ENCODE measurements at regions of chr21 and their contacts with region 1.

Region 1: DNA sequence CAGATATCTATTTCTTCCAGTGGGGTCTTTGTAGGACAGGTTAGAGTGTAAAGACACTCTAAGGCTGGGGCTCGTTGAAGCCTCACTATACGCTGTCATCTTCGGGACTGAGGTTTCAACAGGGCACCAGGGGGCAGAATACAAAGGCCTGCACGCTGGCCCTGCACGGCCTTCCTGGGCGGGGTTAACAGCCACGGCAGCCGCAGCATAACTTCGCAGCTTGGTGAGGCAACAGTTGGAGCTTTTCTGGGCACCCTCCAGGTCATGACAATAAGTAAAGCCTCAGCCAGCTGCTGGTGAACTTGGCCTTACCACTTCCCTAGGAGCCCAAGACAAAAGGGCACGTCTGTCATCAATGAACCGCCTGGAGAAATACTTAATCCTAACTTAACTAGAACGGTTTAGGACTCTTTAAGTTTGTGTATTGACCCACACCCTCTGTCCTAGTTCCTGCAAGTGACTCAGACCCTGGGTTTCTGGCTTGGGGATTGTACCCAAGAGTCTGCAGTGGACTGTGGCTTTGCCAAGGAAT is 2.3 kb upstream of the RUNX1 start:
- DNase-seq: peak; percentile 54
- ATAC-seq: peak; percentile 45
- H3K4me3 Mint-ChIP-seq: peak overlapping the region; percentile 68
- H3K27ac Mint-ChIP-seq: peak overlapping the region; percentile 97
- H3K4me1 Mint-ChIP-seq: peaks cover 60% of the 10 kb centered on the region
- H3K27me3 Mint-ChIP-seq: no peaks in the 10 kb centered on the region
- CTCF ChIP-seq: no peak

Region 2: DNA sequence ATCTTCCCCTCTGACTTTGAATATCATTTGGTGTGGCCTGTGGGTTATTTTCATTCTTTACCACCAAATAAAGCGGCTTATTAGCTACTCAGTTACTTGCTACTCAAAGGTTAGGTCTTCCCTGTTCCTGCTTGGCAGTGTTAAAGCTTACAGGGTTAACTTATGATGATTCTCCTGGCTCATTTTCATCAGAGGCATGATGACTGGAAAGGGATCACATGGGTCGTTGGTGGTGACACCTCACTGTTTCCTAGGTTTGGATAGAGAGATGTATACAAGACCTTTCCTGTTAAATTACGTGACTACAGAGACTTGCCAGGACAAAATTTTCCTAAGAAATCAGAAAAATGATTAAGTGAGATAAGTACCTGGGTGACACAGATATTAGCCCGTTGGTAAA is 950.6 kb before region 1 on chr21:
- CTCF ChIA-PET with region 1: no interaction called
- POLR2A ChIA-PET with region 1: no interaction called
- intact Hi-C with region 1: no loop called
- DNase-seq: no peak
- ATAC-seq: no peak
- H3K4me3 Mint-ChIP-seq: no peak overlapping the region
- H3K27ac Mint-ChIP-seq: no peak overlapping the region
- H3K4me1 Mint-ChIP-seq: peaks cover 41% of the 10 kb centered on the region
- H3K27me3 Mint-ChIP-seq: no peaks in the 10 kb centered on the region
- CTCF ChIP-seq: no peak

Region 3: DNA sequence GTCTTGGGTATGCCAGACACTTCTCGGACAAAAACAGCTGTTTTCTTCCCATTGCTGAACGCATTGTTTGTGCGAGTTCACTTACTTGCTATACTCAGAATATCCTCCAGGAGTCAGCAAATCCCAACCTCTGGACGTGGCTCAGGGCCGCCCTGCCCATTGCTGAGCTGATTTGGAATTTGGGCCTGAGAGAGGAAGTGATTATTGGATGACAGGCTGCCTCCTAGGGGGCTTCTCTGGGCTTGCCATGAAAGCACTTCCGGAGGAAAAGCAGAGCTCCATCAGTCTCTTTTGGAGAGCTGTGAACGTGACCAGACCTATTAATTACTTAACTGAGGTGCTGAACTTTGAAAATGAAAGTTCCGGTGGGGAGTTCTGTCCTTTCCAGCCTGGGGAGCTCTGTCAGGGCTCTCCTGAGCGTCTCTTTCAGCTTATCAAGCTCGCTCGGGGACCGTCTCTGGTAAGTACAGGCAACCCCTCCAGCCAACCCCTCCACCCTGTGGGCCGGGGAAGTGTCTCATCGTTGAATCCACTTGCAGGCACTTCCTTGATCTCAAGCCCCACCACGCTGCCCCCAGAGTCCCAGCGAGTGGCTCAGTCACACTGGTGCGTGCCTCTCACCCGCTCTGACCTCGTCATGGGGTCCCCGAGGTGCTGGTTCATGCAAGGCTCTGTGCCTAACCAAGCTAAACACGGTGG is 305.6 kb before region 1 on chr21:
- CTCF ChIA-PET with region 1: interaction called, 7 read pairs
- POLR2A ChIA-PET with region 1: interaction called, 4 read pairs
- intact Hi-C with region 1: loop called (anchors 1 kb)
- DNase-seq: peak; percentile 33
- ATAC-seq: peak; percentile 95
- H3K4me3 Mint-ChIP-seq: peak overlapping the region; percentile 72
- H3K27ac Mint-ChIP-seq: no peak overlapping the region
- H3K4me1 Mint-ChIP-seq: peaks cover 5% of the 10 kb centered on the region
- H3K27me3 Mint-ChIP-seq: peaks cover 16% of the 10 kb centered on the region
- CTCF ChIP-seq: peak; percentile 36

Region 4: DNA sequence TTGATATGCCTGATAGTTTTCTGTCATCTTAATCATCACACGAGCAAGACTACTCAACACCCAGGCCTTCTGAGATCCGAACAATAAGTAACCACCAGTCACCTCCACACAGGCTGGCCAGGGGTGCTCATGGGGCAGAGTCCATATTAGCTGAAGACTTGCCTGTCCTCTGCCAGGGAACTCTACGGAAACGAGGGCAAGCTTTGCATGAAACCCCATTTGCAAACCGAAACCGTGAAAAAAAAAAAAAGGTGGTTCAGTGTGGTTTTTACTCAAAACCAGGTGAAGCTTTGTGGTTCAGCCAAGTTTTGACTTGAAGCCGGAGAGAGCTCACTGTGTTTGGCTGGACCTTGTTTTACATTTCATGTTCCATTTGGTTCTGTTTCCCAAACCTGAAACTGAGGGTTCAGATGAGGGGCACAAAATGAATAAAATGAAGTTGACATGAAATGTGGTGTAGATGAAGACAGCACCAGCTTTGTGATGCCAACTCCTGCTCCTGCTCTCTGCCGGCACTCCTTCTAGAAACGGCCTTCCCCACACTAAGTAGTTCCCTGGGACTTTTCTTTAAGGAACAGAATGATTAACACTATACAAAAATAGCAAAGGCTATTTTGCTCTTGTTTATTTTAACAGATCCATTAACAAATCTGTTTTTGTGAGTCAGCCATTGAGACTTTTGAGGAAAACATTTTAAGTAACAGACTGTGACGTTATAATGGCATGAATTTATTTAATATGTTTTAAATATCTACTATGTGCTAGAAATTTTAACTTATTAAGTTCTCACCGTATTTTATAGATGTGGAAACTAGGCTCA is 77.0 kb before region 1 on chr21:
- CTCF ChIA-PET with region 1: interaction called, 3 read pairs
- POLR2A ChIA-PET with region 1: interaction called, 16 read pairs
- intact Hi-C with region 1: loop called (anchors 2 kb)
- DNase-seq: no peak
- ATAC-seq: peak; percentile 90
- H3K4me3 Mint-ChIP-seq: peak overlapping the region; percentile 53
- H3K27ac Mint-ChIP-seq: peak overlapping the region; percentile 74
- H3K4me1 Mint-ChIP-seq: peaks cover 46% of the 10 kb centered on the region
- H3K27me3 Mint-ChIP-seq: no peaks in the 10 kb centered on the region
- CTCF ChIP-seq: no peak

Region 5: GRCh38 chr21:35039595-35040289 is 11.6 kb before region 1 on chr21:
- CTCF ChIA-PET with region 1: interaction called, 6 read pairs
- POLR2A ChIA-PET with region 1: interaction called, 12 read pairs
- intact Hi-C with region 1: no loop called
- DNase-seq: no peak
- ATAC-seq: no peak
- H3K4me3 Mint-ChIP-seq: no peak overlapping the region
- H3K27ac Mint-ChIP-seq: no peak overlapping the region
- H3K4me1 Mint-ChIP-seq: peaks cover 80% of the 10 kb centered on the region
- H3K27me3 Mint-ChIP-seq: no peaks in the 10 kb centered on the region
- CTCF ChIP-seq: no peak

Region 6: GRCh38 chr21:35226948-35227744 is 175.8 kb after region 1 on chr21:
- CTCF ChIA-PET with region 1: interaction called, 4 read pairs
- POLR2A ChIA-PET with region 1: interaction called, 7 read pairs
- intact Hi-C with region 1: loop called (anchors 1 kb)
- DNase-seq: no peak
- ATAC-seq: peak; percentile 86
- H3K4me3 Mint-ChIP-seq: peak overlapping the region; percentile 68
- H3K27ac Mint-ChIP-seq: peak overlapping the region; percentile 87
- H3K4me1 Mint-ChIP-seq: peaks cover 44% of the 10 kb centered on the region
- H3K27me3 Mint-ChIP-seq: peaks cover under 1% of the 10 kb centered on the region
- CTCF ChIP-seq: no peak

Region 7: DNA sequence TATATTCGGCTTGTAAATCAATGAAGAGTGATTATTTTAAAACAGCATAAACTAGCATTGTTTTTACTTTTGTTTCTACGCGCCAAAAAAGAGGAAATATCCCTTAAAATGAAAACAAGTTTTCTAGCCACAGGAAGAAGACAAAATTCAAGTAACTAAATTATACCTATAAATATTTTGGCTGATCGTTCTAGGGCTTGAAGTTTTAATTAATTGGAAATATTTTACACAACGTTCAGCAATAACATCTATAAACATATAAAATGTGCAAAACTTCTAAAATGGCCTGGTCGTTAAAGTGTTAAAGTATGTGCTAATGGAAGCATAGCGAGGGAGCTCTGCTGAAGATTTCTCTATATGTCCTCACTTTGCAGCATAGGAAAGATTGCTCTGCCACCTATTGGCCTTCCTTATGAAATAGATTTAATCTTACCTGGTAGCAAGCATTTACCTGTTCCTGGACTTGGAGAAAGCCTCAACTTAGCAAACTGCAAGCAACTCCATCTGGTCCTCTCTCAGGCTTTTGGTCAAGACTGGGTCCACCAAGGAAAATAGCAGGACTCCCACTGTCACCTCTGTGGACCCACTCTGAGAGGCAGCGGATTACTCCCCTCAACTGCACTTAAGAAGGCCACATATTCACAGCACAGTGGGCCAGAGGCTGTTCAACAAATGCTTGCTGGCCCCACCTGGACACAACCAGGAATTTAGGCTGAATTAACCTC is 349.0 kb after region 1 on chr21:
- CTCF ChIA-PET with region 1: interaction called, 46 read pairs
- POLR2A ChIA-PET with region 1: interaction called, 12 read pairs
- intact Hi-C with region 1: loop called (anchors 1 kb)
- DNase-seq: peak; percentile 18
- ATAC-seq: peak; percentile 93
- H3K4me3 Mint-ChIP-seq: peak overlapping the region; percentile 0
- H3K27ac Mint-ChIP-seq: no peak overlapping the region
- H3K4me1 Mint-ChIP-seq: peaks cover 13% of the 10 kb centered on the region
- H3K27me3 Mint-ChIP-seq: peaks cover 8% of the 10 kb centered on the region
- CTCF ChIP-seq: no peak

Region 8: GRCh38 chr21:36028127-36029069 is 977.0 kb after region 1 on chr21:
- CTCF ChIA-PET with region 1: no interaction called
- POLR2A ChIA-PET with region 1: no interaction called
- intact Hi-C with region 1: loop called (anchors 2 kb)
- DNase-seq: peak; percentile 49
- ATAC-seq: peak; percentile 90
- H3K4me3 Mint-ChIP-seq: no peak overlapping the region
- H3K27ac Mint-ChIP-seq: no peak overlapping the region
- H3K4me1 Mint-ChIP-seq: peaks cover 5% of the 10 kb centered on the region
- H3K27me3 Mint-ChIP-seq: no peaks in the 10 kb centered on the region
- CTCF ChIP-seq: peak; percentile 85